PC-9 (cell line): ENCODE measurements at regions of chr4 and their contacts with region 1.

Region 1: GRCh38 chr4:122758033-122758432 is 25.5 kb downstream of the BBS12 start:
- DNase-seq: no peak
- H3K4me3 ChIP-seq: no peak overlapping the region
- H3K27ac ChIP-seq: no peak overlapping the region
- H3K4me1 ChIP-seq: no peaks in the 10 kb centered on the region
- H3K27me3 ChIP-seq: no peaks in the 10 kb centered on the region
- CTCF ChIP-seq: peak; percentile 90

Region 2: GRCh38 chr4:122163767-122164166 is 594.3 kb before region 1 on chr4:
- CTCF ChIA-PET with region 1: no interaction called
- POLR2A ChIA-PET with region 1: no interaction called
- intact Hi-C with region 1: no loop called
- DNase-seq: no peak
- H3K4me3 ChIP-seq: no peak overlapping the region
- H3K27ac ChIP-seq: no peak overlapping the region
- H3K4me1 ChIP-seq: no peaks in the 10 kb centered on the region
- H3K27me3 ChIP-seq: no peaks in the 10 kb centered on the region
- CTCF ChIP-seq: no peak

Region 3: DNA sequence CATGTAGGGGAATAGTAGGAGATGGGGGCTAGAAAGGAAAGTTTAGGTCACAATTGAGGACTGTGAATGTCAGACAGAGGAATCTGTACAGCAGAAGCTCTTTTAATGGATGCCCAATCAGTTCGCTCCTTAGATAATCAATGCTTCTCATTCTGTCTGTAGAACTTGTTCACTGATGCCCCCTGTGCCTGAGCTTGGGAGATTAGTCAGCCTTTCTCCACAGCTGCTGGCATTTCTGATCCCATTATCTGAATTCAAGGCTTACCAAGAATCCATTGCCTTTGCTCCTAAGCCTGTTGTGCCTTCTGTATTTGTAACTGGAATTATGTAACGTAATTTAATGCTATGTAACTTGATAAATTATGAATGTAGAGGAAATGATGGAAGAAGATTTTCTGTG is 78.7 kb before region 1 on chr4:
- CTCF ChIA-PET with region 1: no interaction called
- POLR2A ChIA-PET with region 1: no interaction called
- intact Hi-C with region 1: no loop called
- DNase-seq: peak in 1 of 2 experiments; percentile 12
- H3K4me3 ChIP-seq: no peak overlapping the region
- H3K27ac ChIP-seq: no peak overlapping the region
- H3K4me1 ChIP-seq: no peaks in the 10 kb centered on the region
- H3K27me3 ChIP-seq: no peaks in the 10 kb centered on the region
- CTCF ChIP-seq: no peak

Region 4: GRCh38 chr4:122793811-122794210 is 35.8 kb after region 1 on chr4:
- CTCF ChIA-PET with region 1: no interaction called
- POLR2A ChIA-PET with region 1: no interaction called
- intact Hi-C with region 1: no loop called
- DNase-seq: no peak
- H3K4me3 ChIP-seq: no peak overlapping the region
- H3K27ac ChIP-seq: no peak overlapping the region
- H3K4me1 ChIP-seq: no peaks in the 10 kb centered on the region
- H3K27me3 ChIP-seq: no peaks in the 10 kb centered on the region
- CTCF ChIP-seq: no peak

Region 5: GRCh38 chr4:122914292-122914904 is 156.4 kb after region 1 on chr4:
- CTCF ChIA-PET with region 1: interaction called, 11 read pairs
- POLR2A ChIA-PET with region 1: interaction called, 3 read pairs
- intact Hi-C with region 1: loop called (anchors 1 kb)
- DNase-seq: no peak
- H3K4me3 ChIP-seq: no peak overlapping the region
- H3K27ac ChIP-seq: no peak overlapping the region
- H3K4me1 ChIP-seq: no peaks in the 10 kb centered on the region
- H3K27me3 ChIP-seq: no peaks in the 10 kb centered on the region
- CTCF ChIP-seq: peak; percentile 55

Region 6: GRCh38 chr4:123037804-123038203 is 279.8 kb after region 1 on chr4:
- CTCF ChIA-PET with region 1: no interaction called
- POLR2A ChIA-PET with region 1: no interaction called
- intact Hi-C with region 1: no loop called
- DNase-seq: no peak
- H3K4me3 ChIP-seq: no peak overlapping the region
- H3K27ac ChIP-seq: no peak overlapping the region
- H3K4me1 ChIP-seq: no peaks in the 10 kb centered on the region
- H3K27me3 ChIP-seq: no peaks in the 10 kb centered on the region
- CTCF ChIP-seq: no peak